ENCODE measurements at regions of chr17 and their contacts with region 1.

Region 1: GRCh38 chr17:30336369-30337171 is 2.7 kb upstream of the TMIGD1 start:
- DNase-seq: peak; percentile 78
- H3K4me3 Mint-ChIP-seq: no peak overlapping the region
- H3K27ac Mint-ChIP-seq: no peak overlapping the region
- H3K4me1 Mint-ChIP-seq: peaks cover 37% of the 10 kb centered on the region
- H3K27me3 Mint-ChIP-seq: no peaks in the 10 kb centered on the region

Region 2: DNA sequence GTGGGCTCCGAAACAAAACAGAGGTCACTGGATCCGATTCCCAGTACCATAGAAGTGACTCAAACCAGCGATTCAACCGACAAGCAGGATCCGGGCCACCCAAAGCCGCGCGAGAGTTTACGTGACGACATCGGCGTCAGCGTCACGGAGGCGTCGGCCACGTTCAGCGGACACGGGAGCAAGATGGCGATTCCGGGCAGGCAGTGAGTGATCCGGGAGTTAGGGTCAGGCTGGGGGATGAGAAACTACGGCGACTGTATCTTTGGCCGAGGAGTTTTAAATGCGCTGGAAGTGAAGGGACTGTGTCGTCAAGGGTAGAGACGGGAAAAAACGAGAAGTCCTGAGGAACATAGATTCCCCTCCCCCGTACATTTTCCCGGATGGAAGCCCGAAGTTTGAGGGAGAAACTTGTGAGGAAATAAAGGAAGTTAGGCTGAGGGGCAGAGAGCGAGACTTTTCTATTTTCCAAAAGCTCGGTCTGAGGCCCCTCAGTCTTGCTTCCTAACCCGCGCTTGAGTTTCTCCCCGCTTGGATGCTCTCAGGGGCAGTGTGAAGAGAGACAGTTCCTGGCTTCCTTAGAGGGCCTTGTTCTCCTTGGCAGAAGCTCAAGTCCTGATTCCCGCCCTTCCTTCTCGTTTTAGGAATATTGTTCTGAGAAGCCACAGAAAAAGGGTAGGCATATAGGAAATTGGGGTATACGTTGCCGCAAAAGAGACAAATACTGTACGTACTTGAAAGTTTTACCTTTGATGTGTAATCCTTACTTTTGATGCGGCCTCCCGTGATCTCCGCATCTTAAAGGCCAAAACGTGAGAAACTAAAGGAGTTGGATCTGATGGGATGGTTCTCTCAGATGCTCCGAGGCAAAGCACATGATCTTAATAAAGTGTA is 219.7 kb before region 1 on chr17 and contains the start of gene NSRP1:
- CTCF ChIA-PET with region 1: interaction called, 8 read pairs
- intact Hi-C with region 1: loop called (anchors 1 kb)
- DNase-seq: peak; percentile 98
- H3K4me3 Mint-ChIP-seq: peak within 1 kb of the TSS; percentile 97
- H3K27ac Mint-ChIP-seq: peak within 1 kb of the TSS; percentile 99
- H3K4me1 Mint-ChIP-seq: peaks cover 48% of the 10 kb centered on the region
- H3K27me3 Mint-ChIP-seq: no peaks in the 10 kb centered on the region
- total RNA-seq, gene NSRP1: 21.4 to 21.5 TPM

Region 3: GRCh38 chr17:30134551-30134950 is 202.0 kb before region 1 on chr17:
- CTCF ChIA-PET with region 1: no interaction called
- intact Hi-C with region 1: no loop called
- DNase-seq: no peak
- H3K4me3 Mint-ChIP-seq: no peak overlapping the region
- H3K27ac Mint-ChIP-seq: no peak overlapping the region
- H3K4me1 Mint-ChIP-seq: peaks cover 18% of the 10 kb centered on the region
- H3K27me3 Mint-ChIP-seq: no peaks in the 10 kb centered on the region

Region 4: DNA sequence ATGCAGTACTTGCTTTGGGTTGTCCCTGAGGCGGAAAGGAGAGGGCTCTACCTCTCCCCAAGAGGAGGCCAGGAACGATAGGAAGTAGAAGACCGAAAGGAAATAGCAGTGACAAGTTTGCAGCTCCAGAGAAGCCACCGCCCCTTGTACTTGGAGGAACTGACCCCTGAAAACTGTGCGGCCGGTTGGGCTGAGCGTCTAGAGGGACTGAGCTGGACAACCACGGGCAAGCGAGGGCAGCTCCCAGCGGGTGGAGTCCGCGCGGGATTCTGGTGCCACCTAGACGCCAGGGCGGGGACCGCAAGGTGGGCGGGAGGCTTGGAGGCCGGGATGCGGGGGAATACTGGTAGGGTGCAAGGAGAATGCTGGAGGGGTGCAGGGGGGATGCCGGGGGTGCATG is 99.8 kb before region 1 on chr17:
- CTCF ChIA-PET with region 1: interaction called, 3 read pairs
- intact Hi-C with region 1: loop called (anchors 5 kb)
- DNase-seq: peak; percentile 46
- H3K4me3 Mint-ChIP-seq: no peak overlapping the region
- H3K27ac Mint-ChIP-seq: no peak overlapping the region
- H3K4me1 Mint-ChIP-seq: peaks cover 22% of the 10 kb centered on the region
- H3K27me3 Mint-ChIP-seq: peaks cover 62% of the 10 kb centered on the region

Region 5: GRCh38 chr17:30323895-30324319 is 12.7 kb before region 1 on chr17:
- CTCF ChIA-PET with region 1: interaction called, 28 read pairs
- intact Hi-C with region 1: loop called (anchors 1 kb)
- DNase-seq: peak; percentile 84
- H3K4me3 Mint-ChIP-seq: no peak overlapping the region
- H3K27ac Mint-ChIP-seq: peak overlapping the region; percentile 74
- H3K4me1 Mint-ChIP-seq: peaks cover 25% of the 10 kb centered on the region
- H3K27me3 Mint-ChIP-seq: no peaks in the 10 kb centered on the region

Region 6: DNA sequence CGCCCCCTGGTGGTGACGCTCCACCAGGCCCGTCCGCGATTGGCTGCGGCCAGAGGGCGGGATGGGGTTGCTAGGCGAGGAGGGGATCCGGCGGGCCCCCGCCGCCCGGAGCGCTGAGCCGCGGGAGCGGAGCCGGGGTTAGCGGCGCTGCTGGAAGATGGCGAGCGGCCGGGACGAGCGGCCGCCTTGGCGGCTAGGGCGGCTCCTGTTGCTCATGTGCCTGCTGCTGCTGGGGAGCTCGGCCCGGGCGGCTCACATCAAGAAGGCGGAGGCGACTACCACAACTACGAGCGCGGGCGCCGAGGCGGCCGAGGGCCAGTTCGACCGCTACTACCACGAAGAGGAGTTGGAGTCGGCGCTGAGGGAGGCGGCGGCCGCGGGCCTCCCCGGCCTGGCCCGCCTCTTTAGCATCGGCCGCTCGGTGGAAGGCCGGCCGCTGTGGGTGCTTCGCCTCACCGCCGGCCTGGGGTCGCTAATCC is 42.3 kb after region 1 on chr17 and contains the start of gene CPD:
- CTCF ChIA-PET with region 1: interaction called, 13 read pairs
- intact Hi-C with region 1: loop called (anchors 1 kb)
- DNase-seq: peak; percentile 98
- H3K4me3 Mint-ChIP-seq: peak within 1 kb of the TSS; percentile 86
- H3K27ac Mint-ChIP-seq: peak within 1 kb of the TSS; percentile 92
- H3K4me1 Mint-ChIP-seq: peaks cover 64% of the 10 kb centered on the region
- H3K27me3 Mint-ChIP-seq: no peaks in the 10 kb centered on the region
- total RNA-seq, gene CPD: 37.9 to 43.8 TPM

Region 7: DNA sequence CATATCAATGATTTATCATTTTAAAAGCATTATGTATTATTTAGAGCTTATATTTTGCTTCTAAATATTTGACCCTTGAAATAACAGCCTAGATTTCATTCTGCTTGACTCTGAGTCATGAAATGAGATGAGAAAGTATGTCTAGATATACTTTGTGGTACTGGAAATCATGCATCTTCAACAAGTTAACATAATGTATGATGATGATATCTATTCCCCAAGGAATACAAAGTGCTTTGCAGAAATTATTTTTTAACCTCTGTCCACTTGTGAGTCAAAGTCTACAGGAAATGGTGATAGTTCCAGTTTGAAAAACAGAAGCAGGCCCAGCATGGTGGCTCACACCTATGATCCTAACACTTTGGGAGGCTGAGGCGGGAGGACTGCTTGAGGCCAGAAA is 176.8 kb after region 1 on chr17:
- CTCF ChIA-PET with region 1: no interaction called
- intact Hi-C with region 1: no loop called
- DNase-seq: no peak
- H3K4me3 Mint-ChIP-seq: no peak overlapping the region
- H3K27ac Mint-ChIP-seq: no peak overlapping the region
- H3K4me1 Mint-ChIP-seq: peaks cover 11% of the 10 kb centered on the region
- H3K27me3 Mint-ChIP-seq: no peaks in the 10 kb centered on the region